ENCODE measurements at regions of chr3 and their contacts with region 1.

Region 1: DNA sequence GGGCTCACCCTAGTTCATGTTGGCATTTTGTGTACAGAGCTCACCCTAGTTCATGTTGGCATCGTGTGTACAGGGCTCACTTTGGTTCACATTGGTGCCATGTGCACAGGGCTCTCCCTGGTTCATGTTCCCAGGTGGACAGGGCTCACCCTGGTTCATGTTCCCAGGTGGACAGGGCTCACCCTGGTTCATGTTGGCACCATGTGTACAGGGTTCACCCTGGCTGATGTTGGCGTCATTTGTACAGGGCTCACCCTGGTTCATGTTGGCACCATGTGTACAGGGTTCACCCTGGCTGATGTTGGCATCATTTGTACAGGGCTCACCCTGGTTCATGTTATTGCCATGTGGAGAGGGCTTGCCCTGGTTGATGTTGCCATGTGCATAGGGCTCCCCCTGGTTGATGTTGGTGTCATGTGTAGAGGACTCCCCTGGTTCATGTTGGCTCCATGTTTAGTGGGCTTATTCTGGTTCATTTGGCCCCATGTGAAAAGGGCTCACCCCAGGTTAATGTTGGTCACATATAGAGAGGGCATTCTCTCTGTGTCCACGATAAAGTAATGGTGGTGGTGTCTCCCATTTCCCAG is 31.7 kb upstream of the NR2C2 start:
- DNase-seq: no peak
- ATAC-seq: peak in 1 of 4 donors; percentile 57
- H3K4me3 ChIP-seq: no peak overlapping the region
- H3K27ac ChIP-seq: no peak overlapping the region
- H3K4me1 ChIP-seq: no peaks in the 10 kb centered on the region
- H3K27me3 ChIP-seq: no peaks in the 10 kb centered on the region
- CTCF ChIP-seq: peak; percentile 6

Region 2: GRCh38 chr3:14488563-14489041 is 427.1 kb before region 1 on chr3:
- intact Hi-C with region 1: no loop called
- DNase-seq: no peak
- ATAC-seq: no peak
- H3K4me3 ChIP-seq: no peak overlapping the region
- H3K27ac ChIP-seq: no peak overlapping the region
- H3K4me1 ChIP-seq: no peaks in the 10 kb centered on the region
- H3K27me3 ChIP-seq: no peaks in the 10 kb centered on the region
- CTCF ChIP-seq: no peak

Region 3: GRCh38 chr3:14791343-14791945 is 124.3 kb before region 1 on chr3:
- intact Hi-C with region 1: loop called (anchors 2 to 5 kb)
- DNase-seq: peak; percentile 70 to 75
- ATAC-seq: peak; percentile 53 to 74 (median 60)
- H3K4me3 ChIP-seq: no peak overlapping the region
- H3K27ac ChIP-seq: no peak overlapping the region
- H3K4me1 ChIP-seq: no peaks in the 10 kb centered on the region
- H3K27me3 ChIP-seq: no peaks in the 10 kb centered on the region
- CTCF ChIP-seq: peak; percentile 56

Measured in psoas muscle (tissue), 8 donors.